ENCODE measurements at regions of chr18 and their contacts with region 1.

Region 1: GRCh38 chr18:79058007-79058406 is 11.2 kb upstream of the ATP9B start:
- DNase-seq: no peak
- H3K4me3 ChIP-seq: no peak overlapping the region
- H3K27ac ChIP-seq: no peak overlapping the region
- H3K4me1 ChIP-seq: peaks cover 6% of the 10 kb centered on the region
- H3K27me3 ChIP-seq: no peaks in the 10 kb centered on the region
- CTCF ChIP-seq: no peak

Region 2: GRCh38 chr18:77448046-77448445 is 1610.0 kb before region 1 on chr18:
- CTCF ChIA-PET with region 1: interaction called, 19 read pairs
- dilution Hi-C with region 1: no loop called
- in situ Hi-C with region 1: no loop called
- intact Hi-C with region 1: no loop called
- DNase-seq: no peak
- H3K4me3 ChIP-seq: no peak overlapping the region
- H3K27ac ChIP-seq: no peak overlapping the region
- H3K4me1 ChIP-seq: no peaks in the 10 kb centered on the region
- H3K27me3 ChIP-seq: no peaks in the 10 kb centered on the region
- CTCF ChIP-seq: no peak

Region 3: DNA sequence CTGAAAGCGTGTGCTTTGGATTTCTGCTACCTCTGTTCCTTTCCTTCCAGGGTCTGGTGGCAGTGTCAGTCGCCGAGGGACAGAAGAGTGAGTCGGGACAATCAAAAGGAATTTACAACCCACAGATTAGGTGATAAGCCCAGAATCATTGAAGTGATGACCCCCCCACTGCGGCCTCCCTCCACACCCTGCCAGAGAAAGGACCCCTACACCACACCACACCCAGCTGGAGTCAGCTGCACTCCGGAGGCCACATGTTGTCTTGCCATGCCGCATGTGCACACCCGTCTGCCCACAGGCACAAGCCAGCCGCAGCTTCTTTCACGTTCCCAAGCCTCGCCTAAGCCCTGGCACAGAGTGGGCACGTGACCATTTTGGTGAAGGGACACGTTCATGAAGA is 445.2 kb before region 1 on chr18:
- CTCF ChIA-PET with region 1: no interaction called
- dilution Hi-C with region 1: no loop called
- in situ Hi-C with region 1: no loop called
- intact Hi-C with region 1: no loop called
- DNase-seq: no peak
- H3K4me3 ChIP-seq: no peak overlapping the region
- H3K27ac ChIP-seq: no peak overlapping the region
- H3K4me1 ChIP-seq: no peaks in the 10 kb centered on the region
- H3K27me3 ChIP-seq: no peaks in the 10 kb centered on the region
- CTCF ChIP-seq: no peak

Region 4: GRCh38 chr18:78805840-78806239 is 252.2 kb before region 1 on chr18:
- CTCF ChIA-PET with region 1: no interaction called
- dilution Hi-C with region 1: no loop called
- in situ Hi-C with region 1: no loop called
- intact Hi-C with region 1: no loop called
- DNase-seq: no peak
- H3K4me3 ChIP-seq: no peak overlapping the region
- H3K27ac ChIP-seq: no peak overlapping the region
- H3K4me1 ChIP-seq: no peaks in the 10 kb centered on the region
- H3K27me3 ChIP-seq: no peaks in the 10 kb centered on the region
- CTCF ChIP-seq: no peak

Region 5: DNA sequence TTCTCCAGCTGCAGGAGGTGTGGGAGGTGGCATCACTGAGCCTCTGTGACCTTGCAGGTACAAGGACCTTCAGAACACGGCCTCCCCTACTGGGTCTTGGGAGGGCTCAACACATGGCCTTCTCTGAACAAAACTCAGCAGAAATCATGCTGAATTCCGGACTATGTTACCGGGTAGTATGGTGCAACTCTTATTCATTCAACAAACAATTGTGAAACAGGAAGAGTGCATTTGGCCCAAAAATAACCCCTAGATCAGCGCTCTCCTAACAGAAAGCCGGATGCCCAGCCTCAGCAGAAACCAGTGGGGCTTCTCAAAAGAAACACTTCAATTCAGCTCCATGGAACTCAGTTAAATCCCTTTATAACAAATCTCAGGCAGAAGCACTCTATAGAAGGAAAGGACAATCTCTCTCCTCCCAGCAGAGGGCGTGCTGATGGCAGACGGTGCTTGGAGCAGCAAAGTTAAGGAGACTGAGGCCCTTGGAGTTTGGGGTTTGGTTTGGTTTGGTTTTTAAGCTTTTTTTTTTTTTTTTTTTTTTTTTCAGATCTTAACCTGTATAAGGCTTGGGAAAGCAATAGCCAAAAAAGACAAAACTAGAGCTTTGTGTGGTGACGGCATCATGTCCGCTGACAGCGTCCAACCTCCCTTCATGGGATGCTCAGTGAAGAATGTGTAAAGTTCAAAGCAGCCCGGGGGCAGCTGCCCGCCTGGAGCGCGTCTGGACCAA is 182.6 kb before region 1 on chr18:
- CTCF ChIA-PET with region 1: interaction called, 22 read pairs
- dilution Hi-C with region 1: no loop called
- in situ Hi-C with region 1: no loop called
- intact Hi-C with region 1: no loop called
- DNase-seq: no peak
- H3K4me3 ChIP-seq: no peak overlapping the region
- H3K27ac ChIP-seq: no peak overlapping the region
- H3K4me1 ChIP-seq: no peaks in the 10 kb centered on the region
- H3K27me3 ChIP-seq: no peaks in the 10 kb centered on the region
- CTCF ChIP-seq: peak in 1 of 2 donors; percentile 21

Measured in mammary epithelial cell (primary cell).